Natural killer cell (primary cell): ENCODE measurements at regions of chr13 and their contacts with region 1.

Region 1: GRCh38 chr13:108230377-108230776 is 12.2 kb downstream of the ABHD13 start:
- DNase-seq: no peak
- ATAC-seq: no peak
- H3K4me3 ChIP-seq: no peak overlapping the region
- H3K4me3 Mint-ChIP-seq: no peak overlapping the region
- H3K27ac ChIP-seq: no peak overlapping the region
- H3K27ac Mint-ChIP-seq: no peak overlapping the region
- H3K4me1 ChIP-seq: peaks cover 3% of the 10 kb centered on the region
- H3K4me1 Mint-ChIP-seq: peaks cover 21 to 28% of the 10 kb centered on the region in 2 donors
- H3K27me3 ChIP-seq: no peaks in the 10 kb centered on the region
- H3K27me3 Mint-ChIP-seq: no peaks in the 10 kb centered on the region
- CTCF ChIP-seq: no peak

Region 2: GRCh38 chr13:108322206-108322824 is 91.9 kb after region 1 on chr13:
- intact Hi-C with region 1: loop called (anchors 5 kb)
- DNase-seq: peak in 1 of 2 donors; percentile 67
- ATAC-seq: peak; percentile 73 to 87 (median 85)
- H3K4me3 ChIP-seq: no peak overlapping the region
- H3K4me3 Mint-ChIP-seq: no peak overlapping the region
- H3K27ac ChIP-seq: no peak overlapping the region
- H3K27ac Mint-ChIP-seq: no peak overlapping the region
- H3K4me1 ChIP-seq: peaks cover 3% of the 10 kb centered on the region
- H3K4me1 Mint-ChIP-seq: peaks cover 0 to 11% of the 10 kb centered on the region in 2 donors
- H3K27me3 ChIP-seq: no peaks in the 10 kb centered on the region
- H3K27me3 Mint-ChIP-seq: peaks cover 11 to 26% of the 10 kb centered on the region in 2 donors
- CTCF ChIP-seq: peak; percentile 88

Region 3: GRCh38 chr13:108915634-108916512 is 685.5 kb after region 1 on chr13:
- intact Hi-C with region 1: loop called (anchors 10 kb)
- DNase-seq: peak; percentile 31 to 41
- ATAC-seq: peak; percentile 57 to 74 (median 71)
- H3K4me3 ChIP-seq: no peak overlapping the region
- H3K4me3 Mint-ChIP-seq: peak overlapping the region; percentile 72
- H3K27ac ChIP-seq: no peak overlapping the region
- H3K27ac Mint-ChIP-seq: peak overlapping the region; percentile 58 to 86
- H3K4me1 ChIP-seq: peaks cover 4% of the 10 kb centered on the region
- H3K4me1 Mint-ChIP-seq: peaks cover 17 to 19% of the 10 kb centered on the region in 2 donors
- H3K27me3 ChIP-seq: no peaks in the 10 kb centered on the region
- H3K27me3 Mint-ChIP-seq: peaks cover 8 to 9% of the 10 kb centered on the region in 2 donors
- CTCF ChIP-seq: no peak